Lower leg skin (tissue), 4 donors: ENCODE measurements at regions of chr6 and their contacts with region 1.

Region 1: DNA sequence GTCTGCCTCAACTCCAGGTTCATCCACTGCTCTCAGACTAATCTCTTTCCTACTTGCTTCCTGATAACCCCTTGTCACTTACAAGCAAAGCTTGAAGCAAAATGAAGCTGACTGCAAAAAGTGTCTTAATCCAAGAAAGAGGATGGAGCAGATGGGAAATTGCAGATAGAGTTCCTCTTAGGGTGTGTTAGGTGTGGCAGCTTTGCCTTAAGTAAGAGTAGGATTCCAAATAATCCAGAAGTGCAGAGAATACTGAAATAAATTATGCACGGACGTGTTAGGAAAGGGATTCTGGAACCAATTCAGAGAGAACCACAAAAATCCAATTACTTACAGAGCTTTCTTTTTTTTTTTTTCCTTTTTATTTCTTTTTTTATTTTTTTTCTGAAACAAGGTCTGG is 6.1 kb upstream of the RPL7L1 start:
- DNase-seq: no peak
- H3K4me3 ChIP-seq: no peak overlapping the region
- CTCF ChIP-seq: no peak
- POLR2A ChIP-seq: no peak

Region 2: DNA sequence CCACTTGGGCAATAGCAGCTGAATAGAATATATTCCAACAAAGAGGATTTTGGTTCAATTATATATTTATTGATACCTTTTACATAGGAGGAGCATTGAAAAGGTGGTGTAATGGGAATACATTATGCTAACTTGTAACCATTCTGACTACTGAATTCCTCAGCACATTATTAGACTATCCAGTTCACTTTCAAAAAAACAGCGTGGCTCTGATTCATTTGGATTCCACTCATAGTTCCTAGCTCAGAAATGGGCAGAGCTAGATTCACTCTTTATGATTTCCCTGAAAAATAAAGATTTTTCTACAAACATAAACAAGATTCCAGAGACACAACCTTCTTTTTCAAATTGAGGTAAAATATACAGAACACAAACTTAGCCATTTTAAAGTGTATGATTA is 412.4 kb before region 1 on chr6:
- intact Hi-C with region 1: no loop called
- DNase-seq: no peak
- H3K4me3 ChIP-seq: no peak overlapping the region
- CTCF ChIP-seq: no peak
- POLR2A ChIP-seq: no peak

Region 3: DNA sequence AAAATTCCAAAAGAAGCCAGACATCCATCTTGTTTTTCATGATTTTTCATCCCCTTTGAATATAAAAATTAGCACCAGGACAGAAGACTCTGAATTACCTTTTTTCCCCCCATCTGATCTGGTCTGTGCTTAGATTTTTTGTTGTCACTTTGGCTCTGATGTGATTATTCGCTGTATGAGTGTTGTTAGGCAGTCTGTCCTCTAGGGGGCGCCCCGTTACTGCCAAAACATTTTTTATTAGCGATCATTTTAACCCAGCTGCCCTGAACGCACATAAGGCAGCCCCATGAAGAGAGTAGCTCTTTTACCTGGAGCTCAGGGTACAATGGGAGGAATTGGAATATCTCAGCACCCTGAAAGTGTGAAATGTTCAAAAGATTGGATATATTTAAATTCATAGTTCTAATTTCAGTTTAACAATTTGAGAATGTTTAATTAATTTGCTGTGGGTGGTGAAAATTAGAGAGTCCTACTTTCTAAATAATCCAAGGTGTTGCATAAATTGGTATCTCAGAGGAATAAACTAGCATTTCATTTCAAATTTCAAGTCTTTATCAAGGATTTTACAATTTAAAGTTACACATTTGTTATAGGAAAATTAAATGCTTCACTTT is 211.7 kb before region 1 on chr6:
- intact Hi-C with region 1: loop called (anchors 5 kb)
- DNase-seq: peak; percentile 77 to 95
- H3K4me3 ChIP-seq: no peak overlapping the region
- CTCF ChIP-seq: peak in 1 of 3 donors; percentile 59
- POLR2A ChIP-seq: no peak

Region 4: GRCh38 chr6:43053545-43054205 is 180.4 kb after region 1 on chr6 and contains the start of gene CUL7:
- intact Hi-C with region 1: no loop called
- DNase-seq: peak; percentile 93 to 98
- H3K4me3 ChIP-seq: peak within 1 kb of the TSS; percentile 60
- CTCF ChIP-seq: no peak
- POLR2A ChIP-seq: peak in 1 of 2 donors; percentile 18
- total RNA-seq, gene CUL7: 11.8 to 18.2 (median 13.6) TPM

Region 5: GRCh38 chr6:43181942-43182860 is 308.9 kb after region 1 on chr6 and contains the start of gene CUL9:
- intact Hi-C with region 1: no loop called
- DNase-seq: peak; percentile 74 to 96
- H3K4me3 ChIP-seq: peak within 1 kb of the TSS; percentile 44
- CTCF ChIP-seq: no peak
- POLR2A ChIP-seq: no peak
- total RNA-seq, gene CUL9: 38.7 to 64.4 (median 47.4) TPM